ENCODE measurements at regions of chr14 and their contacts with region 1.

Region 1: DNA sequence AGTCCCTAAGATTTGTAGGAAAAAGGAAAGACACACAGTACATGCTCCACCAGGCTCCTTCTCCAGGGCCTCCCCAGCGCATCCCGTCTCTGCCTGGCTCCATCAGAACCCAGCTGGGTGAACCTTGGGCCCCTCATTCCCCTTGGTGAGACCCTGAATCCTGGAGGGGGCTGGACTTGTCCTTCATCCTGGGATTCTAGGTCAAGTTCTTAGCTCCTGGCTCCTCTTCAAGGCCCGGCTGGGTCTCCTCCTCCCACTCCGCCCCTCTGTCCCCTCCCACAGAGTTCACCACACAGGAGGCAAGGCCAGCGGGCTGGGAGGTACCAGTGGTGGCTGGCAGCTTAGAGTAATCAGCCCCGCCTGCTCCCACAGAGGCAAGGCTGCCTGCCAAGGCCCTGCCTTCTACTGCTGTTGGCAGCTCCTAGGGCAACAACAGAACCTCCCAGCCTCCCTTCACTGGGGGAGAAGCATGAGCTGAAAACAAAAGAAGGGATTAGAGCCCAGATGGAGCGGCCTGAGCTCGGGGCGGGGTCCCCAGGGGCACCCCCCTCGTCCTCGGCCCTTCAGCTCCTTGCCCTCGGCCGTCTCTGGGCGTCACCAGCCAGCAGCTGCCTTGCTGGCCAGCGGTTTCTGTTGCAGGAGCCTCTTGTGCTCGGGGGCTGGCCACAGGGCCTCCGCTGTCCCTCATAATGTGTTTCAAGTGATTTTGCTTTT is 49.4 kb downstream of the PSMA6 start:
- H3K4me3 Mint-ChIP-seq: peak overlapping the region; percentile 75
- H3K27ac Mint-ChIP-seq: peak overlapping the region; percentile 97
- H3K4me1 Mint-ChIP-seq: peaks cover 75% of the 10 kb centered on the region
- H3K27me3 Mint-ChIP-seq: no peaks in the 10 kb centered on the region

Region 2: DNA sequence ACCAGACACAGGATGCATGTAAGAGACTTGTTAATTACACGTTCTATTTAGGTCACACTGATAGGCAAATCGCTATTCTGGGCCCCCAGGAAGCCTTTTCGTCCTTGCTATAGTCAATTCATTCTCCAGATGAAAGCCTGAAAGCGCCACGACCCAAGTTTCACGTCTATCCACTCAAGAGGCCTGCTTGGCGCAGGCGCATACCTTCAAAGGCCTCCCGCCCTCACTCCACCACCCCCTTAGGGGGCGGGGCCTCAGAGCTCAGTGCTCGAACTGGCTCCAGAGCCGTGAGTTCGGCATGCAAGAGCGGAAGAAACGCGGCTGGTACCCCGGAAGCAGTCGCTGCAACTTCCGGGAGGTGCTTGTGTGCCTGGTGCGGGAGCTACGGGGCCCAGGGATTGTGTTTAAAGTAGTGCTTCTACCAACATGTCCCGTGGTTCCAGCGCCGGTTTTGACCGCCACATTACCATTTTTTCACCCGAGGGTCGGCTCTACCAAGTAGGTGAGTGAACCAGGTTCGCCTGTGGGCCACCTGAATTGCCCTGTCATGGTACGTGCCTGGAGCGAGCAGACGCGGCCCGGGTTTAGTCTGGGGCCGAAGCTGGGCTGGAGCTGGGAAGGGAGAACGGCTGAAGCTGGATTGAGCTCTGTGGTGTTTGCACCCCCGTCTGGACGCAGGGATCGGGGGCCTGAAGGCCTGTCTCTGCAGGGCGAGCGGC is 49.4 kb before region 1 on chr14 and contains the start of gene PSMA6:
- intact Hi-C with region 1: loop called (anchors 10 kb)
- H3K4me3 Mint-ChIP-seq: peak within 1 kb of the TSS; percentile 98
- H3K27ac Mint-ChIP-seq: peak within 1 kb of the TSS; percentile 92
- H3K4me1 Mint-ChIP-seq: peaks cover 51% of the 10 kb centered on the region
- H3K27me3 Mint-ChIP-seq: no peaks in the 10 kb centered on the region

Region 3: DNA sequence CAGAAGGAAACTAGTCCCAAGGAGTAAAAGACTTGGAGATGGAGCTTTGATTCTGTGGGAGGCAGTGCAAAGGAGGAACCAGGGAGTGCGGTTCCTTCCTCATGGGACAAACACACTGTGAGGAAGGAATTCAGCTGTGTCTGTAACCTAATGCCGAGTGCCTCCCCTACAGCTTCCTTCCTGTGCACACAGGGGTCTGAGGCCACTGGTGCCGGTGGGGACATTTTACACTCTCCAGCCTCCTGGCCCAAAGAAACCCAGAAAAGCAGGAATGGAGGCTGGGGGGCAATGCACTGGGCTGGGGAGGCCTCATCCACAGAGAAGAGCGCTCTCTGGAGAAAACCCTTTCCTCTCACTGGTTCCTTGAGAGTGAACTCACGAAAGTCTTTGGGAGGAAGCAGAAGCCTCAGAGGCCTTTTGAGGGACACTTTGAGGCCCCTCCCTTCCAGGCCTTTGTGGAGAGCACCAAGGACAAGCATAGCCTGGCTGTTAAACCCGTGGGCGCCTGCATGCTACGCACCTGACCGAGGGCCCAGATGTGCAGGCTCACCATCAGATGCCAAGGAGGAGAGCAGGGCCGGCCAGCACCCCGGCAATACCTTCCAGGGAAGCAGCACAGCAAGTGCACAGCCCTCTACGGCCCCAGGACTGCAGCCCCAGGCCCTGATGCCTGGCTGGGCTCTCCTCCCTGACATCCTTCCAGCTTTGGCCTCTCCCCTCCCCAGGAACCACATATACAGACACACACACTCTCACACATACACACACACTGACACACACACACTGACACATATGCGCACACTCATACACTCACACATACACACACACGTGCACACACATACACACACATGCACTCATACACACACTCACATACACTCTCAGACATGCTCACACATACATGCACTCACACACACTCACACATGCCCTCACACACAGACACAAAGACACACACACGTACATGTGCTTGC is 10.9 kb after region 1 on chr14:
- intact Hi-C with region 1: loop called (anchors 1 kb)
- H3K4me3 Mint-ChIP-seq: peak overlapping the region; percentile 25
- H3K27ac Mint-ChIP-seq: peak overlapping the region; percentile 69
- H3K4me1 Mint-ChIP-seq: peaks cover 47% of the 10 kb centered on the region
- H3K27me3 Mint-ChIP-seq: no peaks in the 10 kb centered on the region

Measured in dendritic cell treated with granulocyte-macrophage colony-stimulating factor and Interleukin-4, amounts not matched to agents 40 ng/mL and 50 ng/mL, for 4 days (primary cell).